ENCODE measurements at regions of chr6 and their contacts with region 1.

Region 1: GRCh38 chr6:36780442-36781177 is 58.6 kb downstream of the CPNE5 start:
- DNase-seq: no peak
- ATAC-seq: no peak
- H3K4me3 ChIP-seq: no peak overlapping the region
- H3K27ac ChIP-seq: no peak overlapping the region
- H3K4me1 ChIP-seq: peaks cover 21% of the 10 kb centered on the region
- H3K27me3 ChIP-seq: peaks cover 0 to 6% of the 10 kb centered on the region in 2 experiments; a peak in 1 of 4 replicates
- CTCF ChIP-seq: no peak
- EP300 ChIP-seq: no peak
- POLR2A ChIP-seq: no peak
- RAD21 ChIP-seq: no peak

Region 2: GRCh38 chr6:36793913-36794712 is 13.5 kb after region 1 on chr6:
- CTCF ChIA-PET with region 1: interaction called, 16 read pairs
- POLR2A ChIA-PET with region 1: interaction called, 3 read pairs
- RAD21 ChIA-PET with region 1: interaction called, 5 read pairs
- SMC1A ChIA-PET with region 1: interaction called, 5 read pairs
- in situ Hi-C with region 1: no loop called
- intact Hi-C with region 1: no loop called
- DNase-seq: no peak
- ATAC-seq: peak; percentile 53
- H3K4me3 ChIP-seq: no peak overlapping the region
- H3K27ac ChIP-seq: no peak overlapping the region
- H3K4me1 ChIP-seq: no peaks in the 10 kb centered on the region
- H3K27me3 ChIP-seq: peaks cover 2 to 8% of the 10 kb centered on the region in 2 experiments; a peak in 2 of 4 replicates
- CTCF ChIP-seq: no peak
- EP300 ChIP-seq: no peak
- POLR2A ChIP-seq: no peak
- RAD21 ChIP-seq: no peak

Region 3: GRCh38 chr6:36800223-36801076 is 19.8 kb after region 1 on chr6:
- CTCF ChIA-PET with region 1: interaction called, 16 read pairs
- POLR2A ChIA-PET with region 1: no interaction called
- RAD21 ChIA-PET with region 1: no interaction called
- SMC1A ChIA-PET with region 1: no interaction called
- in situ Hi-C with region 1: no loop called
- intact Hi-C with region 1: no loop called
- DNase-seq: no peak
- ATAC-seq: no peak
- H3K4me3 ChIP-seq: no peak overlapping the region
- H3K27ac ChIP-seq: no peak overlapping the region
- H3K4me1 ChIP-seq: no peaks in the 10 kb centered on the region
- H3K27me3 ChIP-seq: no peaks in the 10 kb centered on the region; a peak in 2 of 4 replicates
- CTCF ChIP-seq: no peak
- EP300 ChIP-seq: no peak
- POLR2A ChIP-seq: no peak
- RAD21 ChIP-seq: no peak

Region 4: DNA sequence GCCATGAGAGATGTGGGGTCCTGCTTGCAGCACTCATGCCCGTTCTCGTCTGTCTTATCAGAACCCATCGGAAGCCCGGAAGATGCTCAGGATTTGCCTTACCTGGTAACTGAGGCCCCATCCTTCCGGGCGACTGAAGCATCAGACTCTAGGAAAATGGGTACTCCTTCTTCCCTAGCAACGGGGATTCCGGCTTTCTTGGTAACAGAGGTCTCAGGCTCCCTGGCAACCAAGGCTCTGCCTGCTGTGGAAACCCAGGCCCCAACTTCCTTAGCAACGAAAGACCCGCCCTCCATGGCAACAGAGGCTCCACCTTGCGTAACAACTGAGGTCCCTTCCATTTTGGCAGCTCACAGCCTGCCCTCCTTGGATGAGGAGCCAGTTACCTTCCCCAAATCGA is 182.3 kb after region 1 on chr6:
- CTCF ChIA-PET with region 1: no interaction called
- POLR2A ChIA-PET with region 1: no interaction called
- RAD21 ChIA-PET with region 1: no interaction called
- SMC1A ChIA-PET with region 1: no interaction called
- in situ Hi-C with region 1: no loop called
- intact Hi-C with region 1: no loop called
- DNase-seq: no peak
- ATAC-seq: peak; percentile 54
- H3K4me3 ChIP-seq: no peak overlapping the region
- H3K27ac ChIP-seq: no peak overlapping the region
- H3K4me1 ChIP-seq: peaks cover 14% of the 10 kb centered on the region
- H3K27me3 ChIP-seq: no peaks in the 10 kb centered on the region
- CTCF ChIP-seq: no peak
- EP300 ChIP-seq: no peak
- POLR2A ChIP-seq: 0 out of 2 replicates have a peak, but pooled peaks have one; percentile 19
- RAD21 ChIP-seq: no peak

Measured in GM12878 (cell line).